ENCODE measurements at regions of chr11 and their contacts with region 1.

Region 1: DNA sequence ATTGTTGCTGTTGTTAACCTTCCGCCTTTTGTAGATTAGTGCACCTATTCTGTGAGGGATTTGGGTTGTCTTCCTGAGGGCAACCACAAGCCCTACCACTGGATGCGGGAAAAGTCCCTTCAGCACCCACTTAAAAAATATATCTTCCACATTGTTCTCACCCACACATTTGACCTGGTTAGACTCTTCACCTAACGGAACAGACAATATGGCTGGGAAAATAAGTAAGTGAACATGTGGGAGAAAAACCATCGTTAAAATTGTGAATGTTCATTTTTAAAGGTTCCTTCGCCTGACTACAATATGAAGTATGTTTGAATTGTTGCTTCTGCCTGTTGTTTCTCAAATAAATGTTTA is 72.0 kb upstream of the MPEG1 start:
- DNase-seq: no peak
- H3K4me3 ChIP-seq: no peak overlapping the region
- H3K27ac ChIP-seq: no peak overlapping the region
- H3K4me1 ChIP-seq: peaks cover 5 to 7% of the 10 kb centered on the region in 2 donors
- H3K27me3 ChIP-seq: no peaks in the 10 kb centered on the region
- CTCF ChIP-seq: no peak
- POLR2A ChIP-seq: no peak

Region 2: DNA sequence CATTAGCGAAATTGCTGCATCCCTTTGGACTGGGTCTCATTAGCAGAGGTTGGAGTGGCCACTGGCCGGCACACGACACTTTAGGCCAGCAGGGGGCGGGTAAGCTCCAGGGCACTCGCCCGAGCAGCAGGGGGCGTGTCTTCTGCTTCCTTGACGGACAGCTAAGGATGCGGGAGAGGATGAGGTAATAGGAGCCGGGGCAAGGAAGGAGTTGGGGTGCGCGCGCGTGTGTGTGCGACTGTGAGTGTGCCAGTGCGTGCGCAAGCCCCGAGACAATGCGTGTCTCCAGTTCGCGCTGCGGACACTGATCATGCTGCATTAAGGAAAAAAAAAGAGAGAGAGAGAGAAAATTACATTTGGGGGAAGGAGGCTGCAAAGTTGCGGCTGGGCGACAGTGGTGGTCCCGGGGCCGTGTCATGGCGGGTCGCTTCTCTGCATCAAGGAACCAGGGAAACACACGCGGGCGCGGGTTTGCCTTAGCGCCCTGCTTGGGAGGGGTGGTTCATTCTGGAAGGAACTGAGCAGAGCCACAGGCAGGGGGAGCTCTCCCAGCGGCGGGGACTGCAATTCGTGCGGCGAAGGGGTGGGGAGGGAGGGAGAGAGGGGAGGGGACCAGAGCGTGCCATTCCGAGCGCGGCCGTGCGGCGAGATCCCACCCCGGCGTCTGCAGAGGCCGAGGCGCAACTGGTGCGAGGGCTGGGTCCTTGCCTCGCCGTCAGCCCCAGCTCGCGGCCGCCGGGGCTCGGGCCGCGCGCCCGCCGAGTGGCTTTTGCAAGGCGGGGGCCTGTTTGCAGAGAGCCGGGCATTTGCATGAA is 113.0 kb before region 1 on chr11 and contains the start of gene DTX4:
- intact Hi-C with region 1: loop called (anchors 2 kb)
- DNase-seq: peak; percentile 94
- H3K4me3 ChIP-seq: peak within 1 kb of the TSS in 2 of 3 donors; percentile 49 to 57
- H3K27ac ChIP-seq: peak within 1 kb of the TSS in 2 of 3 donors; percentile 66 to 78
- H3K4me1 ChIP-seq: peaks cover 17 to 18% of the 10 kb centered on the region in 2 donors
- H3K27me3 ChIP-seq: no peaks in the 10 kb centered on the region
- CTCF ChIP-seq: peak; percentile 73 to 97 (median 93)
- POLR2A ChIP-seq: peak in 1 of 2 donors; percentile 60
- total RNA-seq, gene DTX4: 9.6 to 29.3 (median 17.5) TPM

Region 3: GRCh38 chr11:59197991-59198390 is 86.8 kb before region 1 on chr11:
- intact Hi-C with region 1: loop called (anchors 5 kb)
- DNase-seq: peak; percentile 94 to 96
- H3K4me3 ChIP-seq: no peak overlapping the region
- H3K27ac ChIP-seq: no peak overlapping the region
- H3K4me1 ChIP-seq: peaks cover 7 to 8% of the 10 kb centered on the region in 2 donors
- H3K27me3 ChIP-seq: no peaks in the 10 kb centered on the region
- CTCF ChIP-seq: no peak
- POLR2A ChIP-seq: no peak

Region 4: DNA sequence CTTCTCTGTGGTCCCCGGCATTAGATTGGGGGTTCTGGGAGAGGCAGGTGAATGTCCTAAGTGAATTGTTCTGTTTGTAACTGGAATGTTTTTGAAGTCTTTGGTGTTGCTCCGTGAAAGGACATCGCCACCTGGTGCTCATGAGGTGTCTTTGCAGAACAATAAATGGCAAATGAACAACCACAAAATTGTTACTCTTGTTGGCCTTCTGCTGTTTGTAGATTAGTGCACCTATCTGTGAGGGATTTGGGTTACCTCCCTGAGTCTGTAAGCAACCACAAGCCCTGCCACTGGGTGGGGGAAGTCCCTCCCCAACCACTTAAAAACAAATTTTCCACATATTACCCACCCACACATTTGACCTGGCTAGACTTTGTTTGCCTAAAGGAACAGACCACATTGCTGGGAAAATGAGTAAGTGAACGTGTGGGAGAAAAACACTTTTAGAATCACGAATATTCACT is 76.7 kb before region 1 on chr11:
- intact Hi-C with region 1: loop called (anchors 5 kb)
- DNase-seq: peak; percentile 47 to 63
- H3K4me3 ChIP-seq: no peak overlapping the region
- H3K27ac ChIP-seq: peak overlapping the region in 2 of 3 donors; percentile 54 to 64
- H3K4me1 ChIP-seq: peaks cover 8 to 26% of the 10 kb centered on the region in 2 donors
- H3K27me3 ChIP-seq: no peaks in the 10 kb centered on the region
- CTCF ChIP-seq: peak; percentile 28 to 80 (median 76)
- POLR2A ChIP-seq: peak in 1 of 2 donors; percentile 7

Region 5: DNA sequence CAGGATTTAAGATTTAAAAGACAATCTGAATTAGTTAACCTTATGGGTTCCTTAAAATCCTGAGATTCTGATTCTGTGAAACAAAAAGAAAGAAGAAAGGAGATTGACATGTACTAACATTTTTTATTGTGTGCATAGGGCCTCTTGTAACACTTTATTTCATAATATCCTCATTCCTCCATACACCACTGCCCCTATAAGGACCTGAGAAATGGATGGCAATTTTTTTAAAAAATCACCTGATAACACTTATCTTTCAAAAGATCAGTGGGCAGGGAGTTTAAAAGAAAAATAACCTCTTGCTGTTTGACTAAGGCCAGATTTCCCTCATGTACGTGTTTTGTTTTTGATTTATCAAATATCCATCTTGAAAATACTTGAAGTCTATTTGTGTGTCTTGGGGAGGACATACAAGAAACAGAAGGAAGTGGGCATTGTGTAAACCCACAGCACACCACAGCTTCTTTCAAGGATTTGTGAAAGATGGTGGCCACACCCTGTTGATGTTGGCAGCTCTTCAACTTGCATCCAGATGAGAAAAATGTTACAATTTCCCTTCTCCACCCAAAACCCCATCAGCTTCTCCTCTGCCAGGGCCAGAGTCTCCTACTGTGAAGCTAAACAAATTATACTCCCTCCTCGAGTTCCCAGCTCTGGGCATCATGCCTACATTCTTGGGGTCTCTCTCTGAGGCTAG is 37.1 kb before region 1 on chr11:
- intact Hi-C with region 1: no loop called
- DNase-seq: peak; percentile 55 to 64
- H3K4me3 ChIP-seq: no peak overlapping the region
- H3K27ac ChIP-seq: peak overlapping the region; percentile 47 to 57 (median 57)
- H3K4me1 ChIP-seq: peaks cover 22 to 30% of the 10 kb centered on the region in 2 donors
- H3K27me3 ChIP-seq: no peaks in the 10 kb centered on the region
- CTCF ChIP-seq: no peak
- POLR2A ChIP-seq: no peak

Measured in thyroid gland (tissue), 4 donors.